ENCODE measurements at regions of chr4 and their contacts with region 1.

Region 1: DNA sequence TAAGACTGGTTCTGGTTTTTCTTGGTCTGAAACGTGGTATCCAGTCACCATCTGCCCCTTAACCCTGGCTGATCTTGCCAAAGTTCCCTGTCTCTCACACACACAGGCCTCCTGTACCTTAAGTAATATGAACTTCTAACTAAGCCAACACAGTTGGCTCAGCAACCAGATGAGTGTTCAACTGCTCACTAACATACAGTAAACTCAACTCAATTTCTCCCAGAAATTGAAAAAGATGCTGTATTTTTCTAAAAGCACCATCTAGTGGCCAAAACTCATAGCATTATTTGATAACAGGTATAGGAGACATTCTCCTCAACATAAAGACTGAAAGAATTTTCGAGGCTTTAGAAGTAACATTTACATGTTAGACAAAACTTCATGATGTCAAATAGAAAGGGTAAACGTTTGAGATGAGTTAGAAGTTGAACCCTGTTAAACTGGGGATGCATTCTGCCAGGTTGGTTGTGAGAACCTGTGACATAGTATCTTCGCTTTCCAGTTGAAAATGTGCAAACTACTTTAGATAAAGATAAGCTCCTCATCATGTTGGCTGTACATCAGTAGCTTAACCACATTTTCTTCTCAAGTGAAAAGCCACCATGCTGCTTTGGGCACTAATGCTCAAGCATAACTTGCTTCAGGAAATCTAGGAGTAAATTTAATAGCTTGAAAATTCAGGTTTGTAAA is 31.2 kb downstream of the CCNI start:
- DNase-seq: peak in 2 of 9 experiments; percentile 46 to 62
- ATAC-seq: peak; percentile 60
- H3K4me3 ChIP-seq: no peak overlapping the region
- H3K4me3 Mint-ChIP-seq: no peak overlapping the region
- H3K27ac ChIP-seq: no peak overlapping the region
- H3K27ac Mint-ChIP-seq: peak overlapping the region; percentile 60
- H3K4me1 ChIP-seq: peaks cover 6% of the 10 kb centered on the region
- H3K4me1 Mint-ChIP-seq: peaks cover 16% of the 10 kb centered on the region
- H3K27me3 ChIP-seq: no peaks in the 10 kb centered on the region
- H3K27me3 Mint-ChIP-seq: no peaks in the 10 kb centered on the region
- CTCF ChIP-seq: peak; percentile 56

Region 2: GRCh38 chr4:76420762-76421581 is 623.6 kb before region 1 on chr4 and contains the start of gene CCDC158:
- CTCF ChIA-PET with region 1: no interaction called
- POLR2A ChIA-PET with region 1: no interaction called
- intact Hi-C with region 1: loop called in 1 of 2 experiments (anchors 10 kb)
- DNase-seq: peak in 2 of 9 experiments; percentile 17 to 29
- ATAC-seq: peak; percentile 44
- H3K4me3 ChIP-seq: peak within 1 kb of the TSS in 1 of 2 experiments; percentile 35
- H3K4me3 Mint-ChIP-seq: peak within 1 kb of the TSS; percentile 70
- H3K27ac ChIP-seq: no peak within 1 kb of the TSS
- H3K27ac Mint-ChIP-seq: no peak within 1 kb of the TSS
- H3K4me1 ChIP-seq: no peaks in the 10 kb centered on the region
- H3K4me1 Mint-ChIP-seq: peaks cover 5% of the 10 kb centered on the region
- H3K27me3 ChIP-seq: no peaks in the 10 kb centered on the region
- H3K27me3 Mint-ChIP-seq: peaks cover 28% of the 10 kb centered on the region
- CTCF ChIP-seq: no peak
- total RNA-seq, gene CCDC158: not detected

Region 3: GRCh38 chr4:76459291-76459723 is 585.3 kb before region 1 on chr4:
- CTCF ChIA-PET with region 1: no interaction called
- POLR2A ChIA-PET with region 1: no interaction called
- intact Hi-C with region 1: no loop called
- DNase-seq: no peak
- ATAC-seq: no peak
- H3K4me3 ChIP-seq: no peak overlapping the region
- H3K4me3 Mint-ChIP-seq: no peak overlapping the region
- H3K27ac ChIP-seq: no peak overlapping the region
- H3K27ac Mint-ChIP-seq: no peak overlapping the region
- H3K4me1 ChIP-seq: no peaks in the 10 kb centered on the region
- H3K4me1 Mint-ChIP-seq: no peaks in the 10 kb centered on the region
- H3K27me3 ChIP-seq: peaks cover 0 to 2% of the 10 kb centered on the region in 2 experiments
- H3K27me3 Mint-ChIP-seq: peaks cover 12% of the 10 kb centered on the region
- CTCF ChIP-seq: no peak

Region 4: DNA sequence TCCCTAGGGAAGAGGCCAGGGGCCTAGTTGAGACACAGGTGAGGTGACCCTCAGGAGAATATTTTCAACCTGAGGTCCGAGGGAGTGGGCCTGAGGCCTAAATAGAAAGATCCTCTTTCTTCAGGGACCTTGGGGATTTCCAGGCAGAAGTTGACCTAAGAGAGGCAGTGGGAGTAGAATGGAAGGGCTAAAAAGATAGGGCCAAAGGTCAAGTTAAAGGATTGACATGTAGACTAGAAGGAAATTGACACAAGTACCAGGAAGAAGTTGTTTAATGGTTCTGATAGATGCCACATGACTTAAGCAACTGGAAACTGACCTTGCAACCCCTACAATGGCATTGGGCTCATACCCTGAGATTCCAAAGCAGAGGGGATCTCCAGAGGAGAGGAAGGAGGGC is 532.7 kb before region 1 on chr4:
- CTCF ChIA-PET with region 1: no interaction called
- POLR2A ChIA-PET with region 1: no interaction called
- intact Hi-C with region 1: loop called (anchors 2 to 5 kb)
- DNase-seq: no peak
- ATAC-seq: no peak
- H3K4me3 ChIP-seq: no peak overlapping the region
- H3K4me3 Mint-ChIP-seq: no peak overlapping the region
- H3K27ac ChIP-seq: no peak overlapping the region
- H3K27ac Mint-ChIP-seq: no peak overlapping the region
- H3K4me1 ChIP-seq: no peaks in the 10 kb centered on the region
- H3K4me1 Mint-ChIP-seq: no peaks in the 10 kb centered on the region
- H3K27me3 ChIP-seq: no peaks in the 10 kb centered on the region
- H3K27me3 Mint-ChIP-seq: no peaks in the 10 kb centered on the region
- CTCF ChIP-seq: no peak

Region 5: DNA sequence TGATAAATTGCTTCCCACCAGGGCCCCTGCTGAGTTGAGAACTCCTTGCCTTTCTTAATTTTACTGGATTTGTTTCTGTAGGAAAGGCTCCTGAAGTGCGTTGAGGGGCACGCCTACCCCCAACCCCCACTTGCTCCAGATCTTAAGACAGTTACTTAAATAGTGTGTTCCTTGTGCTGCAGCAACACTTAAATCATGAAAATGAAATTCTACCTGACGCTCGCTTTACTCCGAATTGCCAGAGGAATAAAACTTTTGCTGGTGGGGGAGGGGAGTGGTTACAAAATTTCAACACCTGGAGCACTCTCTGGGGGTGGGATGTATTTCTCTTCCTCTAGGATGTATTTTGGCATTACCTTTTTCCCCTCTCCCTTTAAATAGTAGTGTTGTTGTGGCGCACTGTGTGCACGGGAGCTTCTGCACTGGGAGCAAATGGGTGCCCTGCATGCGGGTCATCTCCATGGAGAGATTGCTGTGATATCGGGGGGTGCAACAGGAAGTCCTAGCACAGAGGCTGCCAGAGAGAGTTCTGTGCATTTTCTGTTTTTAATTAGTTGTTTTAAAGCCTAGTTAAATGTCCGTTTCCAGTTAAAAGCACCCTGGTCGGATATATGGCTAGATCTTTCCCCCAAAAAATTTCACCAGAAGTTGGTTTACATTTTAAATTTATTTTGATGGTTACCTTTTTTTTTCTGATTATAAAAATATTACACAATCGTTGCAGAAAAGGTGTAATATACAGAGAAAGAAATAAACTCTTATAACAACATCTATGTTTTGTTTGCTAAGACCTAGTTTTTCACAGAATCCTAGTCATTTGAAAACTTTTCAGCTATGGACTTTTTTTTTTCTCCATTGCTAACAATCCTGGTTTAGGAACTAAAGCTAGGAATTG is 354.3 kb before region 1 on chr4:
- CTCF ChIA-PET with region 1: no interaction called
- POLR2A ChIA-PET with region 1: no interaction called
- intact Hi-C with region 1: no loop called
- DNase-seq: no peak
- ATAC-seq: no peak
- H3K4me3 ChIP-seq: peak overlapping the region in 1 of 2 experiments; percentile 20
- H3K4me3 Mint-ChIP-seq: peak overlapping the region; percentile 72
- H3K27ac ChIP-seq: no peak overlapping the region
- H3K27ac Mint-ChIP-seq: no peak overlapping the region
- H3K4me1 ChIP-seq: peaks cover 18% of the 10 kb centered on the region
- H3K4me1 Mint-ChIP-seq: peaks cover 15% of the 10 kb centered on the region
- H3K27me3 ChIP-seq: peaks cover 3 to 21% of the 10 kb centered on the region in 2 experiments
- H3K27me3 Mint-ChIP-seq: peaks cover 61% of the 10 kb centered on the region
- CTCF ChIP-seq: no peak

Region 6: DNA sequence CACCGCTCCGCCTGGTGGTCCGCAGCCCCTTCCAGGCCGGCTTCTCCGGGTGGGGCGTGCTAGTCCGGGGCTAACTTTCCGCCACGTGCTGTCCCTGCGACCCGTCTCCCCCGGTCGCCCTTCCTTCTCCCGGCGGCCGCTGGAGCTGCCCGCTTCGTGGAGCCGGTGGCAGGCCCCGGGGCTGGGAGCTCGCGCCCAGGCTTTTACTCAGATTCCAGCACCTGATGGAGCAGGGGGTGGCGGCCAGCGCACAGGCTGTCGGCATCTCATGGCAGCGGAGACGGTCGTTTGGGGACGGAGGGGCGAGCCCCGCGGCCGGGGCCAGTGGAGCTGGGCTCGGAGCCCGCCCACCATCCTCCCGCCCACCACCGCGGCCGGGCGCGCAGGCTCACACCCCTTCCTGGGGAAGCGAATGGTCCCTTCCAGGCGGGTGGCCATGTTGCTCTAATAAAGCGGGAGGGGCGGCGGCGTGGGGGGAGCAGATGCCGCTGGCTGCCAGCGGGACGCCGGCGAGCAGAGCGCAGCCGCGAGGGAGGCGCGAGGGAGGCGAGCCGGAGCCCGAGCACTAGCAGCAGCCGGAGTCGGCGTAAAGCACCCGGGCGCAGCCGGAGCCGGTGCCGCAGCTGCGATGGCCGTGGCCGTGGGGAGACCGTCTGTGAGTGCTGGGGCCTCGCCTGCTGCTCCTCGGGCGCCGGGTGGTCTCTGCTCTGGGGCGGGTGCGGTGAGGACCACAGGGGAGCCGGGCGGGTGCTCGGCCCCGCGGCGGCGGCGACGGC is 95.1 kb before region 1 on chr4 and contains the start of gene SEPTIN11:
- CTCF ChIA-PET with region 1: interaction called, 24 read pairs
- POLR2A ChIA-PET with region 1: interaction called, 3 read pairs
- intact Hi-C with region 1: loop called (anchors 1 to 2 kb)
- DNase-seq: peak; percentile 74 to 94 (median 84)
- ATAC-seq: peak; percentile 74
- H3K4me3 ChIP-seq: peak within 1 kb of the TSS; percentile 88 to 89
- H3K4me3 Mint-ChIP-seq: peak within 1 kb of the TSS; percentile 92
- H3K27ac ChIP-seq: peak within 1 kb of the TSS; percentile 56 to 66
- H3K27ac Mint-ChIP-seq: peak within 1 kb of the TSS; percentile 77
- H3K4me1 ChIP-seq: peaks cover 15% of the 10 kb centered on the region
- H3K4me1 Mint-ChIP-seq: peaks cover 24% of the 10 kb centered on the region
- H3K27me3 ChIP-seq: no peaks in the 10 kb centered on the region
- H3K27me3 Mint-ChIP-seq: no peaks in the 10 kb centered on the region
- CTCF ChIP-seq: no peak
- total RNA-seq, gene SEPTIN11: 12.3 to 13.1 TPM

Region 7: GRCh38 chr4:77022560-77023179 is 21.9 kb before region 1 on chr4:
- CTCF ChIA-PET with region 1: no interaction called
- POLR2A ChIA-PET with region 1: no interaction called
- intact Hi-C with region 1: no loop called
- DNase-seq: no peak
- ATAC-seq: no peak
- H3K4me3 ChIP-seq: no peak overlapping the region
- H3K4me3 Mint-ChIP-seq: no peak overlapping the region
- H3K27ac ChIP-seq: no peak overlapping the region
- H3K27ac Mint-ChIP-seq: no peak overlapping the region
- H3K4me1 ChIP-seq: peaks cover 2% of the 10 kb centered on the region
- H3K4me1 Mint-ChIP-seq: peaks cover 3% of the 10 kb centered on the region
- H3K27me3 ChIP-seq: no peaks in the 10 kb centered on the region
- H3K27me3 Mint-ChIP-seq: no peaks in the 10 kb centered on the region
- CTCF ChIP-seq: no peak

Region 8: DNA sequence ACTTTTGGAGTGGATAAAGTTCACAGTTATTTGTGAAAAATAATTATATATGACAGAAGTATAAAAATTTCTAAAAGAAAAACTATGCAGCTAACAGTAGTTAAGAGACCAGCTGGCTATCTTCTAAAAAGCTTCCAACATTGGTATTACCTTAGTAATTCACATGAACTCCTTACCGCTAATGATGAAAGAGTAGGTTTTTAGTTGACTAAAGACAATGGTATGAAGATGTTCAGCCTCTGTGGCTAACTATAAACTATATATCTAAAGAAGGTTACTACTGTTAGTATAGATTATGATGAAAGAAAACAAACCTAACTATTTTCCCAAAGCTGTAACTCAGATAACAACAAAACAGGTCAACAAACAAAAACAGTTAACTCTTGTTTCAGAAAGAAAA is 20.8 kb after region 1 on chr4:
- CTCF ChIA-PET with region 1: interaction called, 10 read pairs
- POLR2A ChIA-PET with region 1: no interaction called
- intact Hi-C with region 1: no loop called
- DNase-seq: no peak
- ATAC-seq: no peak
- H3K4me3 ChIP-seq: no peak overlapping the region
- H3K4me3 Mint-ChIP-seq: no peak overlapping the region
- H3K27ac ChIP-seq: no peak overlapping the region
- H3K27ac Mint-ChIP-seq: peak overlapping the region; percentile 22
- H3K4me1 ChIP-seq: peaks cover 16% of the 10 kb centered on the region
- H3K4me1 Mint-ChIP-seq: peaks cover 45% of the 10 kb centered on the region
- H3K27me3 ChIP-seq: no peaks in the 10 kb centered on the region
- H3K27me3 Mint-ChIP-seq: no peaks in the 10 kb centered on the region
- CTCF ChIP-seq: no peak

Region 9: DNA sequence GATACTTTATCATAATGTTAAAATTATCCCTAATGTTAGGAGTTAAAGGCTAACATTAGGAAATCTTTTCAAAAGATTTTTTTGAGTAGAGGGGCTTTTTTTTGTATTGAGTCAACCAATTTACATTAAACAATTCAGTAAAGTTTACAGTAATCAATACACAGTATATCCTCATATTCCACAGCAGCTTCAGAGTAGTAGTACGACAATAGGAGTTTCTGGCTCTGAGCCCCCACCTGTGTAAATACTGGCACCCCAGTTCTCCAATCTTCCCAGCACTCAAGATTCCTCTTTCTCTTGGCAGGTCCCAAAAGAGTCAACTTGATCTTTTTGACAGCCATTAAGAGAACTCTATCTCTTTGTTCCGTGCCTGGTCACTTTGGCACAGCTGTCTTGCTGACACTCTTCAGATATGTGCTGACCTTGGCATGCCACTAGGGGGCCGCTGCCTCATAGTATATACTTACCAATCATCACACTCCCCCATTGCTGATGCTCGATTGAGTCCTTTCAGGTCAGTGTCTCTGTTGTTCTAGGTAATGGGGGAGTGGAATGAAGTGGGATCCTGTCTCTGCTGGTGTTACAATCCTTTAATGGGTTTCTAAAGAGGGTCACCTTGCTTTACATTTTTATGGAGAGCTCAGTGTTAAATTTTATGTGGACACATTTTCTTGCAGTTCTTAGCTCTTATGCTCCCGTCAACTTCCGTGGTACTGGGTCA is 50.7 kb after region 1 on chr4:
- CTCF ChIA-PET with region 1: interaction called, 11 read pairs
- POLR2A ChIA-PET with region 1: no interaction called
- intact Hi-C with region 1: no loop called
- DNase-seq: peak; percentile 48 to 79 (median 75)
- ATAC-seq: peak; percentile 99
- H3K4me3 ChIP-seq: no peak overlapping the region
- H3K4me3 Mint-ChIP-seq: no peak overlapping the region
- H3K27ac ChIP-seq: no peak overlapping the region
- H3K27ac Mint-ChIP-seq: no peak overlapping the region
- H3K4me1 ChIP-seq: peaks cover 1% of the 10 kb centered on the region
- H3K4me1 Mint-ChIP-seq: peaks cover 14% of the 10 kb centered on the region
- H3K27me3 ChIP-seq: peaks cover 0 to 2% of the 10 kb centered on the region in 2 experiments
- H3K27me3 Mint-ChIP-seq: no peaks in the 10 kb centered on the region
- CTCF ChIP-seq: peak; percentile 83

Region 10: GRCh38 chr4:77433418-77433733 is 388.8 kb after region 1 on chr4:
- CTCF ChIA-PET with region 1: no interaction called
- POLR2A ChIA-PET with region 1: no interaction called
- intact Hi-C with region 1: loop called in 1 of 2 experiments (anchors 10 kb)
- DNase-seq: peak in 3 of 9 experiments; percentile 4 to 64 (median 52)
- ATAC-seq: peak; percentile 66
- H3K4me3 ChIP-seq: no peak overlapping the region
- H3K4me3 Mint-ChIP-seq: no peak overlapping the region
- H3K27ac ChIP-seq: no peak overlapping the region
- H3K27ac Mint-ChIP-seq: no peak overlapping the region
- H3K4me1 ChIP-seq: no peaks in the 10 kb centered on the region
- H3K4me1 Mint-ChIP-seq: peaks cover 5% of the 10 kb centered on the region
- H3K27me3 ChIP-seq: no peaks in the 10 kb centered on the region
- H3K27me3 Mint-ChIP-seq: no peaks in the 10 kb centered on the region
- CTCF ChIP-seq: peak; percentile 37